ENCODE measurements at regions of chr2 and their contacts with region 1.

Region 1: DNA sequence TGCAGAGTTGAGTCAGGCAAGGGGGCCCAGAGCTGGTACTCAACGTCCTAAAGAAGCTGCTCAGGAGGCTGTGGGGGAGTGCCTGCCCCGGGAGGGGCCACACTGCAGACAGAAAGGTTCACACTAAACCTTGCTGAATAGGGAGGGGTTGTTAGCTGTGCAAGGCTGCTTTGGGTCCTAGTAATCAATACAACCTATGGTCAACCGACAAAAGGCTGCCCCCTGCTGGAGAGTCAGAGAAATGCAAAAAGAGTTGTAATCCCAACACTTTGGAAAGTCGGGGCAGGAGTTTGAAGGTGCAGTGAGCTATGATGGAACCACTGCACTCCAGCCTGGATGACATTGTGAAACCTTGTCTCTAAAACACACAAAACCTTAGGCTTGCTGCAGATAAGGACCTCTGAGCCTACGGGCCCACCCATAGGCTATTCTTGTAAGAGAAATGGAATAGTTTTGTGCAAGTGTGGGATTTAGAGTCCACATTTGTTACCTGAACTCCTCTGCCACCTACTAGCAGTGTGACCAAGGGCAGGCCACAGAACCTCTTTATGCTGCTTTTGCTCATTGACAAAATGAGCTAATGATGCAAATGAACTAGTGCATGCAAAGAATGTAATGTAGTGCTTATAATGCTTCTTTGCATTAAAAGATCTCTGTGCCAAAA is 81.5 kb downstream of the PRPF40A start:
- DNase-seq: peak; percentile 74
- ATAC-seq: peak; percentile 78
- H3K4me3 Mint-ChIP-seq: no peak overlapping the region
- H3K27ac Mint-ChIP-seq: no peak overlapping the region
- H3K4me1 Mint-ChIP-seq: no peaks in the 10 kb centered on the region
- H3K27me3 Mint-ChIP-seq: no peaks in the 10 kb centered on the region

Region 2: GRCh38 chr2:152036611-152037469 is 598.9 kb before region 1 on chr2:
- CTCF ChIA-PET with region 1: interaction called, 20 read pairs
- POLR2A ChIA-PET with region 1: no interaction called
- DNase-seq: peak; percentile 71
- ATAC-seq: peak; percentile 77
- H3K4me3 Mint-ChIP-seq: no peak overlapping the region
- H3K27ac Mint-ChIP-seq: no peak overlapping the region
- H3K4me1 Mint-ChIP-seq: no peaks in the 10 kb centered on the region
- H3K27me3 Mint-ChIP-seq: no peaks in the 10 kb centered on the region

Region 3: GRCh38 chr2:152175458-152176325 is 460.1 kb before region 1 on chr2 and contains the start of gene STAM2:
- CTCF ChIA-PET with region 1: interaction called, 64 read pairs
- POLR2A ChIA-PET with region 1: interaction called, 4 read pairs
- DNase-seq: peak; percentile 94
- ATAC-seq: peak; percentile 90
- H3K4me3 Mint-ChIP-seq: peak within 1 kb of the TSS; percentile 97
- H3K27ac Mint-ChIP-seq: peak within 1 kb of the TSS; percentile 100
- H3K4me1 Mint-ChIP-seq: peaks cover 29% of the 10 kb centered on the region
- H3K27me3 Mint-ChIP-seq: peaks cover 2% of the 10 kb centered on the region
- total RNA-seq, gene STAM2: 15.5 to 17.5 TPM

Region 4: DNA sequence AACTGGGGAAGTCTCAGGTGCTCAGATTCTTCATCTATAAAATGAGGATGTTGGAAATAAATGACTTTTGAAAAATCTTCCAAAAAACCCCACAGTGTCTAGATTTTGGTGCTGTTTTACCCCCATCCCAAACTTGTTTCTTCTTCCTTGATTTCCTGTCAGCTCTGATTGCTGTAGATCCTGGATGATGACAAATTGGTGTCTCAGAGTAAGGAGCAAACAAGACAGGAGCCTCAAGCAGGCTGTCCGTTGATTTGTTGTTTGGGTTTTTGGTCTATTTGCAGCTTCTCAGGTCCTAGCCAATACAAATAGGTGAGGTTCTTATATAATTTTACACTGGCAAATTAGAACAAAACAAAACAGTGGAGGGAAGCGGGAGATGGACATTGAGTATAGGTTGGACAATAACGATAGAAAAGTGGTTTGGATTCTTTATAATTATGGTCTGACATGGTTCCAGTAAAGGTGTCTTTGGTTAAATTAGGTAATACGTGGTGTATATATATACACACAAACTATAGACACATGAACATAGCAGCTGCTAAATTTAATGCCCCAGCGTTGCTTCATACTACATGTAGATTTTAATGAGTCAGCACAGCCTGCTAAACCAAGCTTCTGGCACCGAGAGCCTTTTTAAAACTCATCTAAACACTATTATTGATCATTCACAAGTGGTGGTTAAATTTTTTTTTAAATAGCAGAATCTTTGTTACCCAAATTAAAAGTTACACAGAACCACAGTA is 158.2 kb before region 1 on chr2:
- CTCF ChIA-PET with region 1: no interaction called
- POLR2A ChIA-PET with region 1: no interaction called
- DNase-seq: no peak
- ATAC-seq: no peak
- H3K4me3 Mint-ChIP-seq: no peak overlapping the region
- H3K27ac Mint-ChIP-seq: no peak overlapping the region
- H3K4me1 Mint-ChIP-seq: no peaks in the 10 kb centered on the region
- H3K27me3 Mint-ChIP-seq: peaks cover 2% of the 10 kb centered on the region

Region 5: DNA sequence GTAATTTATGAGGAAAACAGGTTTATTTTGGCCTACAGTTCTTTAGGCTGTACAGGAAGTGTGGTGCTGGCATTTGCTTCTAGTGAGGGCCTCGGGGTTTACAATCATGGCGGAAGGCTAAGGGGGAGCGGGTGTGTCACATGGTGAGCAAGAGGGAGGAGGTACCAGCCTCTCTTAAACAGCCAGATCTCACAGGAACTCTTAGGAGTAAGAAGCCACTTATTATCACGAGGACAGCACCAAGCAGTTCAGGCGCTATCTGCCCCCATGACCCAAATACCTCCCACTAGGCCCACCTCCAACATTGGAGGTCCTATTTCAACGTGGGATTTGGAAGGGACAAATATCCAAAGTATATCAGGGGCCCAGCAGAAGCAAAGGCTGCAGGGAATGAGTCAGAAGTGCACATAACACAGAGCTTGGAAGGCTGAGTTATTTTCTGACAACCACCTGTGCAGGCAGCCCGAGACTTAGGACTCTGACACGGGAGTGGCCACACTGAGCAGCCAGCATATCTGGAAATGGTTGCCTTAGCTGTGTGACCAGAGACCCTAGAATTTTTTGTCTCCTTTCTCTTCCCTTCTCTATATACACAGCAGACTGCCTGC is 89.4 kb before region 1 on chr2:
- CTCF ChIA-PET with region 1: no interaction called
- POLR2A ChIA-PET with region 1: no interaction called
- DNase-seq: no peak
- ATAC-seq: no peak
- H3K4me3 Mint-ChIP-seq: no peak overlapping the region
- H3K27ac Mint-ChIP-seq: no peak overlapping the region
- H3K4me1 Mint-ChIP-seq: no peaks in the 10 kb centered on the region
- H3K27me3 Mint-ChIP-seq: peaks cover 2% of the 10 kb centered on the region

Region 6: DNA sequence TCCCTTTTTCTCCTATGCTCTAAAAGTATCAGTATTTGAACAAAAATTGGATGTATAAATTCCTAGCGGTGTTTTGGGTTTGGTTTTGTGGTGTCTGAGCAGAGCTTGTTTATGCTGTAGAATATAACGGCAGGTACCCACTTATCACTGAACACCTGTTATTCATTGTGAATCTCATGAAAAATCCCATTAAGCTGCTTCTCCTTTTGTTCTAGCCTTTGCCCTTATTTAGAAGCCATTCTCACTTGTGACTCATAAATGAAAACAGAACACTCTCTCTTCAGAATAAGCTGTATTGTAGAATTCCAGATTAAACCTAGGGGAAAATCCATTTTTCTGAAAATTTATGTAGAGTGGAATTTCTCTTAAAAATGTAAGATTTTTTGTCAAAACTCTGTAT is 22.5 kb before region 1 on chr2:
- CTCF ChIA-PET with region 1: interaction called, 19 read pairs
- POLR2A ChIA-PET with region 1: no interaction called
- DNase-seq: no peak
- ATAC-seq: no peak
- H3K4me3 Mint-ChIP-seq: no peak overlapping the region
- H3K27ac Mint-ChIP-seq: no peak overlapping the region
- H3K4me1 Mint-ChIP-seq: peaks cover 22% of the 10 kb centered on the region
- H3K27me3 Mint-ChIP-seq: peaks cover 3% of the 10 kb centered on the region

Region 7: GRCh38 chr2:152648336-152648735 is 12.6 kb after region 1 on chr2:
- CTCF ChIA-PET with region 1: interaction called, 24 read pairs
- POLR2A ChIA-PET with region 1: no interaction called
- DNase-seq: no peak
- ATAC-seq: peak; percentile 39
- H3K4me3 Mint-ChIP-seq: no peak overlapping the region
- H3K27ac Mint-ChIP-seq: no peak overlapping the region
- H3K4me1 Mint-ChIP-seq: no peaks in the 10 kb centered on the region
- H3K27me3 Mint-ChIP-seq: no peaks in the 10 kb centered on the region